Right lobe of liver (tissue), 6 donors: ENCODE measurements at regions of chr7 and their contacts with region 1.

Region 1: DNA sequence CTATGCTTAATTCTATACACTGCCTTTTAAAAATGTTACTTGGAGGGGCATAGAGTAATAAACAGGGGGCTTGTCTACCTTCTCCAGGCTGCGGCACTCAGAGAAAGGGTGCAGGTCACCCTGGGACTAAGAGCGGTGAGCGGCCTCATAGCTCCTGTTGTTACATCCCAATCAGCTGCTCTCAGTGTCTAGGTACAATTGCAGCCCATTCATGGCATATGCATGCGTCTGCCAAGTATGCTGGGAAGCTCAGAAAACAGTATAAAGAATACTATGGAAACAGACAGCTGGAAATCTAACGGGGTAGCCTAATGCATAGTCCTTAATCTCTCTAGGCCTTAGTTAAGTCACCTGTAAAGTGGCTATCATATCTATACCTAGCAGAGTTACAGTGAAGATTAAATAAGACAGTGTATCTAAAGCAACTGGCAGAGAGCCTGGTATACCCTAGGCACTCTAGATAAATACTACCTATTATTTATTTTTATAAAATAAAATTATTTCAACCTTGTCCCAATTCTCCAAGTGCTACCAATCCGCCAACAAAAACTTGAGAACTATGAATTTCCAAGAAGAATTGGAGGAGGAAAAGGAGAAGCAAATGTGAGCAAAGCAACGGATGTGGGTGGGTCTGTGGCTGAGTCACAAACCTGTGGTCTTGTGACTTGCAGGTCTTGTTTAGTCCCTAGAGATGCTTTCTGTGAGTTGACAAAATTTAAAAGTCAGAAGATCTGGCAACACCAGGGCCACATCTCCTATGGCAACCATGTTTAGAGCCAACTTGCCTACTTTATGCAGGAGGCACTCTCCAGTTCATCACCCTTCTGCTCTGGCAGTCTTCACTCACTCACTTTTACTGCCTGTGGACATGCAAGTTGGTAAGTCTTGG is 183.0 kb downstream of the RAPGEF5 start:
- DNase-seq: no peak
- ATAC-seq: peak in 3 of 4 donors; percentile 6 to 21 (median 14)
- H3K4me3 ChIP-seq: no peak overlapping the region
- H3K27ac ChIP-seq: no peak overlapping the region
- H3K4me1 ChIP-seq: no peaks in the 10 kb centered on the region
- H3K27me3 ChIP-seq: no peaks in the 10 kb centered on the region
- CTCF ChIP-seq: no peak
- POLR2A ChIP-seq: no peak

Region 2: GRCh38 chr7:22238354-22239311 is 64.7 kb after region 1 on chr7:
- intact Hi-C with region 1: loop called in 1 of 2 experiments (anchors 10 kb)
- DNase-seq: no peak
- ATAC-seq: peak in 1 of 4 donors; percentile 24
- H3K4me3 ChIP-seq: no peak overlapping the region
- H3K27ac ChIP-seq: no peak overlapping the region
- H3K4me1 ChIP-seq: peaks cover 0 to 9% (median 2%) of the 10 kb centered on the region in 4 donors
- H3K27me3 ChIP-seq: no peaks in the 10 kb centered on the region
- CTCF ChIP-seq: no peak
- POLR2A ChIP-seq: no peak